AG04450 (cell line): ENCODE measurements at regions of chr17 and their contacts with region 1.

Region 1: GRCh38 chr17:77140166-77140878 is 447 bp upstream of the SEC14L1 start:
- DNase-seq: peak; percentile 96
- H3K4me3 ChIP-seq: peak overlapping the region; percentile 59
- H3K27ac ChIP-seq: peak overlapping the region; percentile 88
- H3K27me3 ChIP-seq: no peaks in the 10 kb centered on the region
- CTCF ChIP-seq: no peak

Region 2: GRCh38 chr17:77127735-77128361 is 12.5 kb before region 1 on chr17:
- CTCF ChIA-PET with region 1: no interaction called
- POLR2A ChIA-PET with region 1: interaction called, 13 read pairs
- DNase-seq: no peak
- H3K4me3 ChIP-seq: no peak overlapping the region
- H3K27ac ChIP-seq: no peak overlapping the region
- H3K27me3 ChIP-seq: no peaks in the 10 kb centered on the region
- CTCF ChIP-seq: no peak

Region 3: DNA sequence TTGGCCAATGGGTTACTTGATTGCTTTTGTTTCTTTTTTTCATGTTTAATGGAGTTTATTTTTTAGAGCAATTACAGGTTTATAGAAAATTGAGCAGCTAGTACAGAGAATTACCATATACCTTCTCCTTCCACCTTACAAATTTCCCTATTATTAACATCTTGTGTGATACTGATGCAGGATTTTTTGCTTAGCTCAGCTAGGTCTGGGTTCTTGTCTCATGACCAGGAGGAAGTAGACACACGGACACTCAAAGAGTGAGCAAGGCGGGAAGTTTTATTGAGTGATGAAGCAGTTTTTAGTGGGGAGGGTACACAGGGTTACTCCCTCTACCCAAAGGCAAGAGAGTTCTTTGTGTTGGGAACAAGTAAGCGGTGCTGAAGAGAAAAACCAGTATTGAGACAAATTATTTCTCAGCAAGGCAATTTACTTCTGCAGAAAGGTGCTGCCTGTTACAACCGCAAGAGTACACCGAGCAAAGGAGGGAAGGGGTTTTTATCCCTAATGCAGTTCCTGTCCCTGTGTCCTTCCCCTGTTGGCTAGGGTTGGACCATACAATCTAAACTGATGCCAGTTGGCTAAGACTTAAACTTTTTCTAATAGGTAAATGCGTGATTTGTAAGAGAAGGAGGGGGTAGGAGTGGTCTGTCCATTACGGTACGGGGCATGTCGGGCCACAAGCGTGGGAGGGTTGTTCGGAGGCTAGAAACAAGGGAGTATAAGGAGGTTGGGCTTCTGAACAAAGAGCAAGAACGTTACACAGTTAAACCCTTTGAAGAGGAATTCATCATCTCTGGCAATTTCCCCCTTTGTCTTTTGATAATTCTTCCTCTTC is 27.4 kb after region 1 on chr17:
- CTCF ChIA-PET with region 1: no interaction called
- POLR2A ChIA-PET with region 1: no interaction called
- DNase-seq: no peak
- H3K4me3 ChIP-seq: no peak overlapping the region
- H3K27ac ChIP-seq: no peak overlapping the region
- H3K27me3 ChIP-seq: no peaks in the 10 kb centered on the region
- CTCF ChIP-seq: no peak

Region 4: GRCh38 chr17:77974396-77974795 is 834.1 kb after region 1 on chr17:
- CTCF ChIA-PET with region 1: interaction called, 13 read pairs
- POLR2A ChIA-PET with region 1: no interaction called
- DNase-seq: no peak
- H3K4me3 ChIP-seq: no peak overlapping the region
- H3K27ac ChIP-seq: no peak overlapping the region
- H3K27me3 ChIP-seq: no peaks in the 10 kb centered on the region
- CTCF ChIP-seq: no peak